B cell (primary cell): ENCODE measurements at regions of chr14 and their contacts with region 1.

Region 1: DNA sequence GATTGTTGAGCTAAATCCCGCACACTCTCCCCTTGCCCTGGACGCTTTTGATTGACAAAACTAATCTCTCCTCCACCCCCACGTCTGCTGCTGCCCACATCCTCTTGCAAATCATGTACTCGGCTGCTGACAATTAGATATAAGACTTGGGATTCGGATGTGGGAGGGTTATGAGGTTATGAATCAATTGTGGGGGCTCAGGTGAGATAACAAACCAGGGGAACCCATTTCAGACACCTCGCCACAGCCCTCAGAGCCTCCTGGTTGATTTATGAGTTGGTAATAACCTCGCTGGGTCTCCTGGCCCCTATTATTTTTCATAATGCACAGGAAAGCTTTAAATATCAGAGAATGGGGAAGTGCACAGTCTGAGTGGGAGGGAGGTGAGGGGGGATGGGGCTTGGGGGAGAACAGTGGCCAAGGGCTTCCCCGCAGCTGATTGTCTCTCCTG is 449.9 kb downstream of the DPF3 start:
- DNase-seq: peak; percentile 53
- ATAC-seq: peak; percentile 67
- H3K4me3 ChIP-seq: peak overlapping the region; percentile 14 to 58 (median 45)
- H3K4me3 Mint-ChIP-seq: peak overlapping the region; percentile 79
- H3K27ac ChIP-seq: peak overlapping the region; percentile 36 to 51
- H3K27ac Mint-ChIP-seq: peak overlapping the region; percentile 77
- H3K4me1 ChIP-seq: peaks cover 30 to 38% of the 10 kb centered on the region in 2 donors
- H3K4me1 Mint-ChIP-seq: peaks cover 37% of the 10 kb centered on the region
- H3K27me3 ChIP-seq: no peaks in the 10 kb centered on the region
- H3K27me3 Mint-ChIP-seq: no peaks in the 10 kb centered on the region
- CTCF ChIP-seq: no peak

Region 2: DNA sequence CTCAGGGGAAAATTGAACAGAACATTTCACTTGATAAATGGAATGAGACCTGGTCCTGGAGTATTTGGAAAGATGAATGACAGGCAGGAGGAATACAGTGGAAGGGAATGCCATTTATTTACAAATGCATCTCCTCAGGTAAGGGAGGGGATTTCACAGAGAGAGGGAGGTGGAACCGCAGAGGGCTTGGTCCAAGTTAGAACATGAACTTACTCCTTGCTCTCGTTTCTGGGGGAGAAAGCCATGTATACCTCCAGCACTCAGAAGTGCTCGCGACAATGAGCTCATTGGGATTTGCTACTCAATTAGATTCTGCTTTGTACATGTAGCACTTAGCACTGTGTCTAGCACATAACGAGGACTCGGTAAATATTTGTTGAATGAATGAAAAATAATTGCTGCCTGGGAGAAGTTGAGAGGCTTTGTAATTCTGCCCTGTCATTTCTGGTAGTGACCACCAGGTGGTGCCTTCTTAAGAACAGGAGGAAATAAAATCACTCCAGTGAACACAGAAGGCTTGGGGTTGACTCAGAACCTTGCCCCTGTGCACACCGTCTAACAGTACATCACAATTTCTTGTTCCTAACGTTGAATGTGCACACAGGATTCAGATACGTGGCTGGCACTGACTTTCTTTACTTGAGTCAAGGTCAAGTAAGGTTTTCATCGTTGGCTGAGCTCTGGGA is 420.2 kb before region 1 on chr14:
- CTCF ChIA-PET with region 1: no interaction called
- POLR2A ChIA-PET with region 1: no interaction called
- intact Hi-C with region 1: loop called (anchors 10 kb)
- DNase-seq: peak; percentile 51
- ATAC-seq: no peak
- H3K4me3 ChIP-seq: no peak overlapping the region
- H3K4me3 Mint-ChIP-seq: no peak overlapping the region
- H3K27ac ChIP-seq: no peak overlapping the region
- H3K27ac Mint-ChIP-seq: no peak overlapping the region
- H3K4me1 ChIP-seq: no peaks in the 10 kb centered on the region
- H3K4me1 Mint-ChIP-seq: no peaks in the 10 kb centered on the region
- H3K27me3 ChIP-seq: peaks cover 0 to 17% (median 5%) of the 10 kb centered on the region in 4 experiments
- H3K27me3 Mint-ChIP-seq: peaks cover 40% of the 10 kb centered on the region
- CTCF ChIP-seq: peak; percentile 74

Region 3: DNA sequence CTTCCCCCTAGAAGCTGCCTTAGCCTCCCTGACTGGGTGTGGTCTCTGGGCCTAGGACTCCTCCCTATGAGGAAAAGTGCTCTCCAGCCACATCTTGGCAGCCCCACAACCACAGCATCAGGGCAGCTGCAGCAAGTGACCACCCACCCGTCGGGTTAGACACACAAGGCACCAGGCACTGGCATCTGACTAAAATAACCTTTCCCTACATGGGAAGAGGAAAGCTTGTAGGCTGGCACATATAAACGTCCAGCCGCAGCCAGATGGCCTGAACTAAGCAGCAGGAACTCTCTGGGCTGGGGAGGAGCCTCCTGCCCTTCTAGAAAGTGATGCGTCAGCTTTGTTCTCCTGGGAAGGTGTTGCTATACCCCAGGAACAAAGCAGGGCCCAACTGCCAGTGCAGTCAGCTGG is 121.1 kb after region 1 on chr14:
- CTCF ChIA-PET with region 1: no interaction called
- POLR2A ChIA-PET with region 1: no interaction called
- intact Hi-C with region 1: no loop called
- DNase-seq: no peak
- ATAC-seq: no peak
- H3K4me3 ChIP-seq: no peak overlapping the region
- H3K4me3 Mint-ChIP-seq: no peak overlapping the region
- H3K27ac ChIP-seq: no peak overlapping the region
- H3K27ac Mint-ChIP-seq: no peak overlapping the region
- H3K4me1 ChIP-seq: peaks cover 22 to 33% of the 10 kb centered on the region in 2 donors
- H3K4me1 Mint-ChIP-seq: peaks cover 30% of the 10 kb centered on the region
- H3K27me3 ChIP-seq: no peaks in the 10 kb centered on the region
- H3K27me3 Mint-ChIP-seq: no peaks in the 10 kb centered on the region
- CTCF ChIP-seq: no peak